Activated B cell treated with CpG ODN at 0.5 μM for 24 hours (primary cell): ENCODE measurements at regions of chr9 and their contacts with region 1.

Region 1: GRCh38 chr9:131656356-131657036 is 83.4 kb downstream of the RAPGEF1 start:
- DNase-seq: peak; percentile 70
- ATAC-seq: peak; percentile 97
- H3K4me3 Mint-ChIP-seq: peak overlapping the region; percentile 62
- H3K27ac Mint-ChIP-seq: peak overlapping the region; percentile 93
- H3K4me1 Mint-ChIP-seq: peaks cover 93% of the 10 kb centered on the region
- H3K27me3 Mint-ChIP-seq: no peaks in the 10 kb centered on the region
- CTCF ChIP-seq: no peak

Region 2: DNA sequence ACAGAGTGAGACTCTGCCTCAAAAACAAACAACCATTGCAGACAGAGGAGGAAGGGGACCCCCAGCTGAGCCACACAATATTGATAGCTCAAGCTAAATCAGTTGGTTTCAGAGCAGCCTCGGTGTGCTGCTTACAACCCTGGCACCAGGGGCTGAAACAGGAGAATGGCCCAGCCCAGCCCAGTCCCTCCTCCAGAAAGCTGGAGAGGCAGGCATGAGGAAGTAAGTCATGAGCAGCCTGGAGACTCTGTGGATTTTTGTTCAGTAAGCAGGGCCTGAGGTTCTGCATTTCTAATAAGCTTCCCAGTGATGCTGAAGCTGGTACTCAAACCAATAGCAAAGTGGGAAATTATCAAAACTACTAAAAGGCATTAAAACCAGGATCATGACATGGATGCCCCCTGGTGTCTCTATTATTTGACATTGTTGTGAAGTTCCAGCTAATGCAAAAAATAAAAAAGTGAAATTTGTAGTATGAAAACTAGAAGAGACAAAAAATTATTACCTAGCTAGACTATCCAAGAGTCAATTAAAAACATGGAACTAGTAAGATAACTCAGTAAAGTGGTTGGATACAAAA is 97.0 kb before region 1 on chr9:
- CTCF ChIA-PET with region 1: no interaction called
- POLR2A ChIA-PET with region 1: no interaction called
- intact Hi-C with region 1: no loop called
- DNase-seq: no peak
- ATAC-seq: no peak
- H3K4me3 Mint-ChIP-seq: no peak overlapping the region
- H3K27ac Mint-ChIP-seq: no peak overlapping the region
- H3K4me1 Mint-ChIP-seq: no peaks in the 10 kb centered on the region
- H3K27me3 Mint-ChIP-seq: peaks cover 15% of the 10 kb centered on the region
- CTCF ChIP-seq: no peak

Region 3: DNA sequence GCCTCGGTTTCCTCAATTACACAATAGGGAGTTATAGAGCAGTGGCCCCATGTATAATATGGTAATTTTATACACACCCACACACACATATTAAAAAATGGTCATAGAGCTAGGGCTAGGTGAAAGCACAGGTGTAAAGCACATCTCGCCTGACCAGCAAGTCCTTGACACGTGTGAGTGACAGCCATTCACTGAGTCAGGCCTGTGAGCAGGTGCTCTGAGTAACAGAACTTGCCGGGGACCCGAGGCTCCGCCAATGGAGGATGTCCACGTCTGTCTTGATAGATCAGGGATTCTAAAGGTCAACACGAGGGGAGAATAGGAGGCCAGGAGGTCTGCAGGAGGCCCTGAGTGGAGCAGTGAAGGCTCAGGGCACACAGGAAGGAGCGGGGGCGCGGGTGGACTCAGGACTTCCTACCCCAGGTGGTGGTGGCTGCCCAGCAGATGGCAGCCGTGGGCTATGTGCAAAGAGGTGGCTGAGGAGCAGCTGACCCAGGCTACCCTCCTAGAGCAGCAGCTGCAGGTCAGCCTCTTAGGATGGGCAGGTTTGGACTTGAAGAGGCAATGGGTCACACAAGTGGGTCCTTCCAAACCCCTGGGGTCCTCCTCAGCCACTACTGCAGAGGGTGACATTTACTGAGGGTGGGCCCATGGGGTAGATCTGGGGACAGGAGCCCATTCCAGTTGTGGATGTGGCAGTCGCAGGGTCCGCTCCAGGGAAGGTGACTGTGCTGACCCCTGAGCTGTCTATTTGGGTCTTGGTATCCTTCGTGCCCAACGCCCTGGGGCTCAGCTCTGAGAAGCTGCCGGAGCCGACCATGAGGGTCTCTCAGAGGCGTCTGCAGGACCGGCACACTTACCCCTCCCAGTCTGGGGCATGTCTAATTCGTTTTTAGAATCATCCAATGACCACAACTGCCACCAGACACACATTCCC is 65.3 kb before region 1 on chr9:
- CTCF ChIA-PET with region 1: no interaction called
- POLR2A ChIA-PET with region 1: no interaction called
- intact Hi-C with region 1: loop called (anchors 2 kb)
- DNase-seq: peak; percentile 67
- ATAC-seq: peak; percentile 88
- H3K4me3 Mint-ChIP-seq: no peak overlapping the region
- H3K27ac Mint-ChIP-seq: peak overlapping the region; percentile 51
- H3K4me1 Mint-ChIP-seq: peaks cover 34% of the 10 kb centered on the region
- H3K27me3 Mint-ChIP-seq: no peaks in the 10 kb centered on the region
- CTCF ChIP-seq: no peak

Region 4: GRCh38 chr9:131621551-131622358 is 34.7 kb before region 1 on chr9:
- CTCF ChIA-PET with region 1: no interaction called
- POLR2A ChIA-PET with region 1: interaction called, 43 read pairs
- intact Hi-C with region 1: loop called (anchors 2 kb)
- DNase-seq: peak; percentile 39
- ATAC-seq: peak; percentile 79
- H3K4me3 Mint-ChIP-seq: peak overlapping the region; percentile 74
- H3K27ac Mint-ChIP-seq: peak overlapping the region; percentile 88
- H3K4me1 Mint-ChIP-seq: peaks cover 47% of the 10 kb centered on the region
- H3K27me3 Mint-ChIP-seq: no peaks in the 10 kb centered on the region
- CTCF ChIP-seq: no peak

Region 5: GRCh38 chr9:131641618-131642495 is 14.6 kb before region 1 on chr9:
- CTCF ChIA-PET with region 1: no interaction called
- POLR2A ChIA-PET with region 1: interaction called, 11 read pairs
- intact Hi-C with region 1: no loop called
- DNase-seq: no peak
- ATAC-seq: no peak
- H3K4me3 Mint-ChIP-seq: no peak overlapping the region
- H3K27ac Mint-ChIP-seq: peak overlapping the region; percentile 86
- H3K4me1 Mint-ChIP-seq: peaks cover 42% of the 10 kb centered on the region
- H3K27me3 Mint-ChIP-seq: no peaks in the 10 kb centered on the region
- CTCF ChIP-seq: no peak

Region 6: GRCh38 chr9:131668439-131669268 is 12.2 kb after region 1 on chr9:
- CTCF ChIA-PET with region 1: interaction called, 4 read pairs
- POLR2A ChIA-PET with region 1: interaction called, 63 read pairs
- intact Hi-C with region 1: loop called (anchors 1 kb)
- DNase-seq: no peak
- ATAC-seq: peak; percentile 61
- H3K4me3 Mint-ChIP-seq: peak overlapping the region; percentile 78
- H3K27ac Mint-ChIP-seq: peak overlapping the region; percentile 93
- H3K4me1 Mint-ChIP-seq: peaks cover 99% of the 10 kb centered on the region
- H3K27me3 Mint-ChIP-seq: no peaks in the 10 kb centered on the region
- CTCF ChIP-seq: no peak

Region 7: DNA sequence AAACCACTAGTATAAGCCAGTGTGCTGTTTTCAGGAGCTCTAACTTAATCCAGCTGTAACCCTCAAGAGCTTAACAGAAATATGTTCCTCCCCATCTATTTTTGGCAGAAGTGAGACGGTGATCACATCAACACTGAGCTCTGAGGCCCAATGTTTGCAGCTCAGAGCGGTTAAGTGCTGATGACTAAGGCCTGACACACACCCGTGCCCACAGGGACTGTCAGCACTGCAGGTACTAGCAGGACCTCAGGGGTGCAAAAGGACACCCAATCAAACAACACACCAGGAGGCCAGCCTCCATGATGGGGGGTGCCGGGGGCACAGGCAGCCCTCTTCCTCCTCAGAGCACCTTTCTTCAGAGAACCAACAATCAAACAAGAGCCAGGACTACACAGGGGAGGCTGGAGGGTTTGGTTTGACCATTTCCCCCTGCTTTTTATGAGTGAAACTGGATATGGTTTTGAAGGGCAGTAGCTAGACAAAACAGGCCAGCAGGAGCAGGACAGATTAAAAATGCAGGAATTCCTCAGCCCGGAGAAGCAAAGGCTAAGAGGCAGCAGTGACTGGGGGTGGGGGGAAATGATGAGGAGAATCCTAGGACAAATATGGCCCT is 22.1 kb after region 1 on chr9:
- CTCF ChIA-PET with region 1: interaction called, 7 read pairs
- POLR2A ChIA-PET with region 1: interaction called, 63 read pairs
- intact Hi-C with region 1: loop called (anchors 1 kb)
- DNase-seq: peak; percentile 63
- ATAC-seq: peak; percentile 90
- H3K4me3 Mint-ChIP-seq: peak overlapping the region; percentile 93
- H3K27ac Mint-ChIP-seq: peak overlapping the region; percentile 93
- H3K4me1 Mint-ChIP-seq: peaks cover 98% of the 10 kb centered on the region
- H3K27me3 Mint-ChIP-seq: no peaks in the 10 kb centered on the region
- CTCF ChIP-seq: no peak

Region 8: GRCh38 chr9:131722009-131722629 is 65.6 kb after region 1 on chr9:
- CTCF ChIA-PET with region 1: interaction called, 3 read pairs
- POLR2A ChIA-PET with region 1: interaction called, 28 read pairs
- intact Hi-C with region 1: no loop called
- DNase-seq: no peak
- ATAC-seq: no peak
- H3K4me3 Mint-ChIP-seq: no peak overlapping the region
- H3K27ac Mint-ChIP-seq: peak overlapping the region; percentile 35
- H3K4me1 Mint-ChIP-seq: peaks cover 94% of the 10 kb centered on the region
- H3K27me3 Mint-ChIP-seq: no peaks in the 10 kb centered on the region
- CTCF ChIP-seq: no peak